ENCODE measurements at regions of chr9 and their contacts with region 1.

Region 1: DNA sequence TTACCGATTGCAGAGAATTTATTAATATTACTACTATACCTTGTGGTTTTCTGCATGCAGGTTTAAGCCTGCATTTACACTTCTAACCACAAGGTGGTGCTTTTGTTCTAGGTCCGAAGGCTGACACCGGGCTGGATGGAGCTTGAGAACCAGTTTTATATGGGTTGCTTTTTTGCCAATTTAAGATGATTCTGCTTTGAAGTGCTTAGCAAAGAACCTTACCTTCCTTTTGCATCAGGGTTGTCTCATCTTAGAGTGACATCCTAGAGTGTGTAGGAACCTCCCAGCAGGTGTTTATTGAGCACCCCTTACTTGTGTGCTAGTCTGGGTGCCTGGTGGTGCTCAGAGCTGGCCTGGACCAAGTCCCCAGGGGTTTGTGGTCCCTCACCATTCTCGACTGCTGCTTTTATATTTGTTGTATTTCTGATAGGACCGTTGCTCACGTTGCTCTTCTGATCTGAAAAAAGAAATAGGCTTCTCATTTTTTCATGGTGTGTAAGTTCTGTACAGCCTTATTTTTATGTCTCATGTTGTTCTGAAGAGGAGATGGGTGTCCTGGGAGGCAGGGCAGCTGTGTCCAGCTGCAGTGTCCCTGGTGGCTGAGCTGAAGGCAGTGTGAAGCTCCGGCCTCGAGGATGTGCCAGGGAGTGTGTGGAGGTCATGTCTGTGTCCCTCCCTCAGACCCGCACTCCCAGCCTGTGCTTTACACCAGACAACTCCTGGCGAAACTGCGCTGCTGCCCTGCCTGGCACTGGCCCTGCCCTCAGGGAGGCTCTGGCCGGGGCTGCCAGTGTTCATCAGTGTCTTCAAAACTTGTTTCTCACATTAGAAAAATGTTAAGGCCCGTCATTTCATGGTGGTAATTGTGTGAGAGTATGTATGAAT is 54.3 kb downstream of the EHMT1 start:
- DNase-seq: peak; percentile 61
- ATAC-seq: peak; percentile 90
- H3K4me3 Mint-ChIP-seq: no peak overlapping the region
- H3K27ac Mint-ChIP-seq: no peak overlapping the region
- H3K4me1 Mint-ChIP-seq: peaks cover 39% of the 10 kb centered on the region
- H3K27me3 Mint-ChIP-seq: no peaks in the 10 kb centered on the region
- CTCF ChIP-seq: peak; percentile 94

Region 2: GRCh38 chr9:137689745-137690529 is 16.8 kb after region 1 on chr9:
- CTCF ChIA-PET with region 1: interaction called, 15 read pairs
- POLR2A ChIA-PET with region 1: interaction called, 3 read pairs
- intact Hi-C with region 1: no loop called
- DNase-seq: no peak
- ATAC-seq: no peak
- H3K4me3 Mint-ChIP-seq: no peak overlapping the region
- H3K27ac Mint-ChIP-seq: no peak overlapping the region
- H3K4me1 Mint-ChIP-seq: peaks cover 47% of the 10 kb centered on the region
- H3K27me3 Mint-ChIP-seq: no peaks in the 10 kb centered on the region
- CTCF ChIP-seq: no peak

Region 3: DNA sequence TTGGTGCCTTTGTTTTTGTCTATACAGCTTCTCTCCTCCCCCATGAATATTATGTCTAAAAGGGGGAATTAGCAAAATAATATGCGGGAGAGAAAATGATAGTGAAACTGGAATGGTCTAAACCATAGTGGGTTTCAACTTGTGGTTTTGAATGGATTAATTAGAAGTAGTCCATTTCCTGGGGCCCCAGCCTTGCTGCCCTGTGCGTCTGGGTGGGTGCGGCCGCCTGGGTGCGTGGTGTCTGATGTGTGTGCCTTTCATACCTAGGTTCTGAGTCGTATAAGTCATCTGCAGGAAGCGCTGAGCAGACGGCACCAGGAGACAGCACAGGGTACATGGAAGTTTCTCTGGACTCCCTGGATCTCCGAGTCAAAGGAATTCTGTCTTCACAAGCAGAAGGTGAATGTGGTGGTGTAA is 84.5 kb after region 1 on chr9:
- CTCF ChIA-PET with region 1: interaction called, 4 read pairs
- POLR2A ChIA-PET with region 1: no interaction called
- intact Hi-C with region 1: loop called (anchors 10 kb)
- DNase-seq: peak; percentile 71
- ATAC-seq: peak; percentile 81
- H3K4me3 Mint-ChIP-seq: no peak overlapping the region
- H3K27ac Mint-ChIP-seq: peak overlapping the region; percentile 71
- H3K4me1 Mint-ChIP-seq: peaks cover 42% of the 10 kb centered on the region
- H3K27me3 Mint-ChIP-seq: no peaks in the 10 kb centered on the region
- CTCF ChIP-seq: no peak

Region 4: GRCh38 chr9:137798901-137799629 is 125.9 kb after region 1 on chr9:
- CTCF ChIA-PET with region 1: no interaction called
- POLR2A ChIA-PET with region 1: no interaction called
- intact Hi-C with region 1: no loop called
- DNase-seq: no peak
- ATAC-seq: no peak
- H3K4me3 Mint-ChIP-seq: no peak overlapping the region
- H3K27ac Mint-ChIP-seq: no peak overlapping the region
- H3K4me1 Mint-ChIP-seq: no peaks in the 10 kb centered on the region
- H3K27me3 Mint-ChIP-seq: no peaks in the 10 kb centered on the region
- CTCF ChIP-seq: no peak